Activated B cell treated with CpG ODN at 0.5 μM for 24 hours (primary cell): ENCODE measurements at regions of chr17 and their contacts with region 1.

Region 1: GRCh38 chr17:78168242-78168902 is at the start of gene SYNGR2:
- DNase-seq: peak; percentile 92
- ATAC-seq: peak; percentile 75
- H3K4me3 Mint-ChIP-seq: peak within 1 kb of the TSS; percentile 84
- H3K27ac Mint-ChIP-seq: peak within 1 kb of the TSS; percentile 90
- H3K4me1 Mint-ChIP-seq: peaks cover 52% of the 10 kb centered on the region
- H3K27me3 Mint-ChIP-seq: no peaks in the 10 kb centered on the region
- CTCF ChIP-seq: no peak
- total RNA-seq, gene SYNGR2: 636 and 647 TPM in 2 replicates

Region 2: GRCh38 chr17:78128551-78129350 is 39.6 kb before region 1 on chr17 and contains the start of gene TMC6:
- CTCF ChIA-PET with region 1: interaction called, 220 read pairs
- POLR2A ChIA-PET with region 1: interaction called, 2,404 read pairs
- intact Hi-C with region 1: loop called (anchors 1 kb)
- DNase-seq: peak; percentile 66
- ATAC-seq: peak; percentile 17
- H3K4me3 Mint-ChIP-seq: peak within 1 kb of the TSS; percentile 92
- H3K27ac Mint-ChIP-seq: peak within 1 kb of the TSS; percentile 93
- H3K4me1 Mint-ChIP-seq: peaks cover 74% of the 10 kb centered on the region
- H3K27me3 Mint-ChIP-seq: no peaks in the 10 kb centered on the region
- CTCF ChIP-seq: no peak
- total RNA-seq, gene TMC6: 746 and 896 TPM in 2 replicates

Region 3: GRCh38 chr17:78133971-78134898 is 34.1 kb before region 1 on chr17:
- CTCF ChIA-PET with region 1: interaction called, 220 read pairs
- POLR2A ChIA-PET with region 1: interaction called, 2,404 read pairs
- intact Hi-C with region 1: loop called (anchors 1 kb)
- DNase-seq: peak; percentile 59
- ATAC-seq: peak; percentile 15
- H3K4me3 Mint-ChIP-seq: peak overlapping the region; percentile 95
- H3K27ac Mint-ChIP-seq: peak overlapping the region; percentile 81
- H3K4me1 Mint-ChIP-seq: peaks cover 87% of the 10 kb centered on the region
- H3K27me3 Mint-ChIP-seq: no peaks in the 10 kb centered on the region
- CTCF ChIP-seq: peak; percentile 69

Region 4: GRCh38 chr17:78154903-78155811 is 13.2 kb before region 1 on chr17:
- CTCF ChIA-PET with region 1: interaction called, 5 read pairs
- POLR2A ChIA-PET with region 1: interaction called, 2,404 read pairs
- intact Hi-C with region 1: loop called (anchors 1 kb)
- DNase-seq: no peak
- ATAC-seq: peak; percentile 74
- H3K4me3 Mint-ChIP-seq: peak overlapping the region; percentile 72
- H3K27ac Mint-ChIP-seq: peak overlapping the region; percentile 97
- H3K4me1 Mint-ChIP-seq: peaks cover 82% of the 10 kb centered on the region
- H3K27me3 Mint-ChIP-seq: no peaks in the 10 kb centered on the region
- CTCF ChIP-seq: no peak

Region 5: DNA sequence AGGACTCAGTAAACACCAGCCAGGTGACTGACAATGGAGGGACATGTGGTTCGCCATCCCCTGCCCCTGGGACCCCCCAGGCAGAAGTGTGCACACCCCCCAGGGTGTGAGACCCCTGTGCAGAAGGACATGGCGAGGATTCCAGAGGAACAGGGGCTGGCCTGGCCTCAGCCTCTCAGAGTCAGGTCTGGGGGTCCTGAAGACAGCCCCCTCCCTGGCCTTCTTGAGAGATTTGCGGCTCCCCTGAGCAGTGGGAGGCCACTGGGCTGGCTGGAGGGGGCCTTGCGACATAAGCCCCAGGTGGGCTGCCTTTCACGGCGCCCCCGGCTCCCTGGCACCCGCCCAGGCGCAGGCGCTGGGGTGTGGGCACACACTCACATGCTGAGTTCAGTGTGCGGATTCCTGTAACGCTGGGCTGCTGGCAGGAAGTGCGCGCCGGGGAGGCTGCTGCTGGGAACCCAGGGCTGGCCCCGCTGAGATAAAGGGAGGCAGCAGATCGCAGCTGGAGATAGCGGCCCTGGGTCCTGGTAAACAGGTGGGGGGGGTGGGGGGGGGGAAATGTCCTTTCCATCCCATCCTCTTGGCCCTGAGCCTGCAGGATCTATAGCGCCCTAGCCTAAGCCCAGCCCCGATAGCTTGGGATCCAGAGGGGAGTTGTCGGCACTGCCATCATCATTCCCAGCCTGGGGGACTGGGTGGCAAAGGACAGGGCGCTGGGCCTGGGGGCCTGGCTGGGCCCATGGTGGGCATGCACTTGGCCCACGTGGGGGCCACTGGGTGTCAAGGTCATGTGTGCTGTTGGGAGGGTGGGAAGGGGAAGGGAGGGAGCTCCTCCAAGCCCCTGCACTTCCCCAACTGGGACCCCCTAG is 90.2 kb after region 1 on chr17:
- CTCF ChIA-PET with region 1: no interaction called
- POLR2A ChIA-PET with region 1: interaction called, 15 read pairs
- intact Hi-C with region 1: no loop called
- DNase-seq: no peak
- ATAC-seq: no peak
- H3K4me3 Mint-ChIP-seq: peak overlapping the region; percentile 57
- H3K27ac Mint-ChIP-seq: peak overlapping the region; percentile 56
- H3K4me1 Mint-ChIP-seq: peaks cover 24% of the 10 kb centered on the region
- H3K27me3 Mint-ChIP-seq: no peaks in the 10 kb centered on the region
- CTCF ChIP-seq: no peak

Region 6: DNA sequence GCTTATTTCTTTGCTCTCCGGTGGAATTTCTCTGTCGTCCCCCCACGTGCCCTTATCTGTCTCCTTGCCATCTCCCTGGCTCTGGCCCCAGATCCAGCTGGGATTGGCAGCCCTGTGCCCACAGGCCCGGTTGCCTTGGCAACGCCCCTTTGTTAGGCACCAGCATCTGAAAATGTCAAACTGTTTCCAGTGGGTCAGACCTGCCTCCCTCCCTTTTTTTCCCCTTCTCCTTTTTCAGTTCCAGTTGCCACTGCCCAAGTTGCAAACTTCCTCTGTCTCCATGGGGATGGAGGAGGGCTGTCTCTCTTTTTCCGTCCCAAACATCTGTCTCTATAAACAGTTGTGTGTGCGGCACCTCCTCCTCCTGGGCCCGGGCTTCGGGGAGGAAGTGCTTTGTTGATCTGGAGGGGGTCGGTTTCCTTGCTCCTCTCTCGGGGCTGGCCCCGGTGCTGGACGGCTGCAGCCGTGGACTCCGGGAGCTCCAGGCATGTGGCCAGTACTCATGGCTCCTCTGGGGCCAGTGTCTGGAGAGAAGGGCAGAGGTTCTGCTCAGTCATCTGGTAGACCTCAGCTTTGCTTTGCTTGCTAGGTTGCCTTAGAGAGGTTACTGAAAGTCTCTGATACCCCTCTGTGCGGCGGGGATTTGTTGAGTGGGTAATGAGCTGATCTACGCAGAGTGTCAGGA is 156.2 kb after region 1 on chr17:
- CTCF ChIA-PET with region 1: no interaction called
- POLR2A ChIA-PET with region 1: interaction called, 14 read pairs
- intact Hi-C with region 1: no loop called
- DNase-seq: no peak
- ATAC-seq: peak; percentile 18
- H3K4me3 Mint-ChIP-seq: peak overlapping the region; percentile 46
- H3K27ac Mint-ChIP-seq: no peak overlapping the region
- H3K4me1 Mint-ChIP-seq: peaks cover 20% of the 10 kb centered on the region
- H3K27me3 Mint-ChIP-seq: peaks cover 4% of the 10 kb centered on the region
- CTCF ChIP-seq: no peak